ENCODE measurements at regions of chr5 and their contacts with region 1.

Region 1: DNA sequence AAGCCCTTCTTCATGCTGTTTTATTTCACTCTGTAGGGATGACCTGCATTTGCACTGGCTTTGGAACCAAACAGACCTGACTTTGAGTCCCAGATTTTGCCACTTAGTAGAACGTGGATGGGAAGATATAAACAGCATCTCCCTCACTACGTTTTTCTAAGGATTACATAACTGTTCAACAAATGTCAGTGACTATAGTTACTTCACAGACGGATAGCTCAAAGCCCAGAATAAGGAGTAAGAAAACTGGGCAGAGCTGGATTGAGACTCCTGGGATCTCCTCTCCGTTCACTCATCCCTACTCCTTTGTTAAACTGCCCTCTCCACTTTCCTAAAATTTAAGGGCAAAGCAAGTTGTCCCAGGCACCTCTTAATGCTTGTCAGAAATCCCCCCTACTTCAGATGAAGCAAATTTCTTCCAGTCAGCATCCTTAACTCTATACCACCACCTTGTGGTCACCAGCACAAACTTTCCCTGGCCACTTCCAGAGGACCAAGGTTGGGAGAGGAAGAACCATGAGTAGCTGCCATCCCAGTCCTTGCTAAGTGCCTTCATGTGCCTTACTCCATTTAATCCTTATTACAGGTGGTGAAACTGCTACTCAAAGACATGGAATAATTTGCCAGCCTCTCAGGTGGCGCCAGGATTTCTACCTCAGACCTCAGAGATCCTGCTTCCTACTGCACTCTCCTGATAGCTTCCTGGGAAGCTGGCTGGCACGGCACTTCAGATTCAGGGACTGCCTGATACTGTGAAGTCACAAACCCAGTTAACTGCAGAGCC is 38.4 kb downstream of the EGR1 start:
- DNase-seq: peak; percentile 34
- ATAC-seq: peak; percentile 82
- H3K4me3 ChIP-seq: no peak overlapping the region
- H3K27ac ChIP-seq: no peak overlapping the region
- H3K4me1 ChIP-seq: no peaks in the 10 kb centered on the region
- H3K27me3 ChIP-seq: no peaks in the 10 kb centered on the region
- CTCF ChIP-seq: peak; percentile 72 to 78 (median 76)
- POLR2A ChIP-seq: no peak
- RAD21 ChIP-seq: peak; percentile 89

Region 2: GRCh38 chr5:138464008-138464387 is 39.7 kb before region 1 on chr5:
- CTCF ChIA-PET with region 1: interaction called, 48 read pairs
- POLR2A ChIA-PET with region 1: interaction called, 16 read pairs
- RAD21 ChIA-PET with region 1: no interaction called
- intact Hi-C with region 1: no loop called
- DNase-seq: peak; percentile 81
- ATAC-seq: peak; percentile 52
- H3K4me3 ChIP-seq: peak overlapping the region; percentile 53 to 82
- H3K27ac ChIP-seq: peak overlapping the region; percentile 88
- H3K4me1 ChIP-seq: peaks cover 0 to 40% of the 10 kb centered on the region in 2 experiments; a peak in 3 of 4 replicates
- H3K27me3 ChIP-seq: no peaks in the 10 kb centered on the region
- CTCF ChIP-seq: peak in 2 of 3 experiments; percentile 77 to 83; a peak in 4 of 6 replicates
- POLR2A ChIP-seq: peak; percentile 33
- RAD21 ChIP-seq: no peak

Region 3: GRCh38 chr5:138514021-138514420 is 10.3 kb after region 1 on chr5:
- CTCF ChIA-PET with region 1: interaction called, 10 read pairs
- POLR2A ChIA-PET with region 1: no interaction called
- RAD21 ChIA-PET with region 1: no interaction called
- intact Hi-C with region 1: no loop called
- DNase-seq: no peak
- ATAC-seq: no peak
- H3K4me3 ChIP-seq: no peak overlapping the region
- H3K27ac ChIP-seq: no peak overlapping the region
- H3K4me1 ChIP-seq: no peaks in the 10 kb centered on the region
- H3K27me3 ChIP-seq: no peaks in the 10 kb centered on the region
- CTCF ChIP-seq: no peak
- POLR2A ChIP-seq: no peak
- RAD21 ChIP-seq: no peak

Region 4: DNA sequence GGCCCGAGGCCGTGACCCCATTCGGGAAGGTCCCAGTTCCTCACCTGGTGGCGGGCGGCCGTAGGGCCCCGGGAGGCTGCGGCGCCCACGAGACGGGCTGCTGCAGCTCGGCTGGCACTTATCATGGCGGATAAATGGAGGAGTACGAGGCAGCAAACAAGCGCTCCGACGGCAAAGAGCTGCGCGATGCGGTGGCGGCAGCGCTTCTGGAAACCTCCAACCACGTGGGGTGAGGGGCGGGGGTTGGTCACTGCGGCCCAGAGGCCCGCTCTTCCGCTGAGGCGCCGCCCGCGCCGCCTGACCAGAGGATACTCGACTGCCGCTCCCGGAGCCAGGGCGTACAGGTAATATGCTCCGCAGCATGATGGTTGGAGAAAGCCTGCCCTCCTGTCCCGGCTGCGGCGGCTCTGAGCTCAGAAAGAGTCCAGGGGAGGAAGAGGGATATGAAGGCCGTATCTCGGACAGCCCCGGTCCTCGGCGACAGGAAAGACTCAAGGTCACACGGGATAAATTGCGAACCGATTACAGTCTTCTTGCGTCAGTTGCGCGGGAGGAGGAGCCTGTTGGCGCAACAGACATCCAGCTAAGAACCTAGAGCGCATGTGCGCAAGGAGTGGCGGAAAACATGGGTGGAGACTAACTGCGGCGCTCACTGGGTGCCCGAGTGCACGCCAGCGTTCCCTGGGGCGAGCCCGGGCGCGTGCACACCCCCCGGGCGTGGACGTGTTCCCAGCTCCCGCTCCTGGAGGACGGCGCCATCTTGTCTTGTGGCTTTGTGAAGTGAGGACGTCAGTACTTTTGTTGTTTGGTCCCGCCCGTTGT is 71.7 kb after region 1 on chr5 and contains the start of gene HSPA9:
- CTCF ChIA-PET with region 1: no interaction called
- POLR2A ChIA-PET with region 1: no interaction called
- RAD21 ChIA-PET with region 1: no interaction called
- intact Hi-C with region 1: no loop called
- DNase-seq: peak; percentile 99
- ATAC-seq: peak; percentile 87
- H3K4me3 ChIP-seq: peak within 1 kb of the TSS; percentile 88 to 100
- H3K27ac ChIP-seq: peak within 1 kb of the TSS; percentile 96
- H3K4me1 ChIP-seq: peaks cover 10 to 29% of the 10 kb centered on the region in 2 experiments; a peak in 3 of 4 replicates
- H3K27me3 ChIP-seq: no peaks in the 10 kb centered on the region
- CTCF ChIP-seq: no peak
- POLR2A ChIP-seq: no peak
- RAD21 ChIP-seq: no peak
- total RNA-seq, gene HSPA9: 486 TPM

Region 5: DNA sequence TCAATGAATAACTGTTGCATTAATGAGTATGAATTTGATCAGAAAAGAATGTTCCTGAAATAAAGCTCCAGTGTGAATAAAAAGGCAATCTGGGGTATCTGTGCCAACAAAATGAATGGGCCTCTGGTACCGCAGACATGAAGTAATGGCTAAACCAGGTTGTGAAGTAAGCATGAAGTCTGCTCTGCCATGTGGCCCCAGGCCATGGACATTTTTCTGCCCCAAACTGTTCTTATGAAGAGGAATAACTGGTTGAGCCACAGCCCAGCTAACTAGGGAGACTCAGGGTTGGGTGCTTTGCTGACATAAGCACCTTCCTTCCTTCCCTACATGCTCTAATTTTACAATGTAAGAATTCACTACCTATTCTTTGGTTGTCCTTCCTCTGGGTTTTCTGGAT is 518.8 kb after region 1 on chr5:
- CTCF ChIA-PET with region 1: no interaction called
- POLR2A ChIA-PET with region 1: no interaction called
- RAD21 ChIA-PET with region 1: no interaction called
- intact Hi-C with region 1: no loop called
- DNase-seq: no peak
- ATAC-seq: no peak
- H3K4me3 ChIP-seq: no peak overlapping the region
- H3K27ac ChIP-seq: no peak overlapping the region
- H3K4me1 ChIP-seq: no peaks in the 10 kb centered on the region; a peak in 1 of 4 replicates
- H3K27me3 ChIP-seq: no peaks in the 10 kb centered on the region
- CTCF ChIP-seq: no peak
- POLR2A ChIP-seq: no peak
- RAD21 ChIP-seq: no peak